Heart right ventricle (tissue), 16 donors: ENCODE measurements at regions of chr18 and their contacts with region 1.

Region 1: DNA sequence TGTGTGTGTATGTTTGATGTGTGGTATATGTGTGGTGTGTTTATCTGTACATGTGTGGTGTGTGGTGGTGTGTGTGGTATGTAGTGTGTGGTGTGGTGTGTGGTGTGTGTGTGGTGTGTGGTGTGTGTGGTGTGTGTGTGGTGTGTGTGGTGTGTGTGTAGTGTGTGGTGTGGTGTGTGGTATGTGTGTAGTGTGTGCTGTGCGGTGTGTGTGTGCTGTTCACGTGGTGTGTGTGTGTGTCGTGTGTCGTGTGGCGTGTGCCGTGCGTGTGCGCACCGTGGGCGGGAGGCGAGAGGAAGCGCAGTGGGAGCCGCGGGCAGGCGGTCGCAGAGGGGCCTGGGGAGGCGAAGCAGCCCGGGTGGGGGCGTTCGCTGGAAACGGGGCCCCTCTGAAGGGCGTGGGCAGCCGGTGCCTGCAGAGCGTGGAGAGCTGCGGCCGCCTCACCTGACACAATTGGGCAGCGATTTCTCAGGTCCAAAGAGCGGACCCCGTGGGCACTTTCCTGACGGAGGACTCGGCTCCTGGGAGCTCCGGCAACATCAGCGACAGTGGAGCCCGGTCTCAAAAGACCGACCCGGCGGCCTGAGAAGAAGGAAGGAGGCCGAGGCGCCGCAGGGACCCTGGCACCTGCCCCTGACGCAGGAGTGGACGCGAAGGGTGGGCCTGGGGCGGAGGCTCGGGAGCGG is 741.1 kb upstream of the SALL3 start:
- DNase-seq: no peak
- ATAC-seq: no peak
- H3K4me3 ChIP-seq: no peak overlapping the region
- H3K27ac ChIP-seq: no peak overlapping the region
- H3K4me1 ChIP-seq: peaks cover 0 to 7% (median 0%) of the 10 kb centered on the region in 9 donors
- H3K27me3 ChIP-seq: no peaks in the 10 kb centered on the region
- CTCF ChIP-seq: no peak

Region 2: GRCh38 chr18:78293940-78294541 is 55.5 kb after region 1 on chr18:
- intact Hi-C with region 1: loop called in 1 of 10 experiments (anchors 10 kb)
- DNase-seq: no peak
- ATAC-seq: peak in 4 of 8 donors; percentile 22 to 40 (median 30)
- H3K4me3 ChIP-seq: peak overlapping the region in 7 of 10 donors; percentile 19 to 43 (median 30)
- H3K27ac ChIP-seq: peak overlapping the region in 2 of 10 donors; percentile 41 to 64
- H3K4me1 ChIP-seq: peaks cover 0 to 7% (median 0%) of the 10 kb centered on the region in 9 donors
- H3K27me3 ChIP-seq: peaks cover 0 to 17% (median 0%) of the 10 kb centered on the region in 7 donors
- CTCF ChIP-seq: no peak

Region 3: GRCh38 chr18:79151191-79151590 is 912.6 kb after region 1 on chr18:
- intact Hi-C with region 1: no loop called
- DNase-seq: no peak
- ATAC-seq: no peak
- H3K4me3 ChIP-seq: no peak overlapping the region
- H3K27ac ChIP-seq: no peak overlapping the region
- H3K4me1 ChIP-seq: peaks cover 0 to 1% (median 0%) of the 10 kb centered on the region in 9 donors
- H3K27me3 ChIP-seq: no peaks in the 10 kb centered on the region
- CTCF ChIP-seq: no peak